Natural killer cell (primary cell): ENCODE measurements at regions of chr11 and their contacts with region 1.

Region 1: DNA sequence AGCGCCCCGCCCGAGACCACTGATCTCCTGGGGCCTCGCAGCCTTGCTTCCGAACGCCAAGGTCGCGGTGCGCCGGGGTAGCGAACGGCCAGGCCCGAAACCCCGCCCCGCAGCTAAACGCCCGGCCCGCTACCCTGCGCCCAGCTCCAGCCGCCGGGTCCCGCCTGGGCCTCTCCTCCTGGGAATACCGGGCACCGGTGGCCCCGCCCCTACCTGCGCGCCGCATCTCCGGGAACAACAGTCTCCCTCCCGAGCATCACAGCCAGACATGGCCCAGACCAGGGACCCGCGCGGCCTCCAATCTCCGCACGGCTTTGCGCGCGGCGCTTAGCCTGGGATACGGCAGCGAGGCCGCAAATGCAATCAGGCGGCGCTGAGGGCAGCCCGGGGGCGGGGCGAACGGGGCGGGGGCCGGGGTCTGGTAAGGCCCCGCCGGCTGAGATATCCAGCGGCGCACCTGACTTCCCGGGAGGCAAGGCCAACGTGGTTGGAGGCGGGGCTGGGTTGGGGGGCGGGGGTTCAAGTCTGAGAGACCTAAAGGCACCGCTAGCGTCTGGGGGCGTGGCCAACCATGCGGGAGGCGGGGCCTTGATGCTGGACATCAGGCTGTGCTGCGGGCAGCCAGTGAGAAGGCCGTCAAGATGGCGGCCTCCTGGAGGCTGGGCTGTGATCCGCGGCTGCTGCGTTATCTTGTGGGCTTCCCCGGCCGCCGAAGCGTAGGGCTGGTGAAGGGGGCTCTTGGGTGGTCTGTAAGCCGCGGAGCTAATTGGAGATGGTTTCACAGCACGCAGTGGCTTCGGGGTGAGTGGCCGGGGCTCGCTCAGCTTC is at the starts of genes APIP and PDHX:
- DNase-seq: peak; percentile 88 to 94
- ATAC-seq: peak; percentile 86 to 94 (median 91)
- H3K4me3 ChIP-seq: peak within 1 kb of the TSS; percentile 96
- H3K4me3 Mint-ChIP-seq: peak within 1 kb of the TSS; percentile 97
- H3K27ac ChIP-seq: peak within 1 kb of the TSS; percentile 90
- H3K27ac Mint-ChIP-seq: peak within 1 kb of the TSS; percentile 95 to 98
- H3K4me1 ChIP-seq: peaks cover 14% of the 10 kb centered on the region
- H3K4me1 Mint-ChIP-seq: peaks cover 41% of the 10 kb centered on the region in 2 donors
- H3K27me3 ChIP-seq: no peaks in the 10 kb centered on the region
- H3K27me3 Mint-ChIP-seq: no peaks in the 10 kb centered on the region
- CTCF ChIP-seq: no peak
- total RNA-seq, gene APIP: 6.6 to 9.4 (median 8.1) TPM
- total RNA-seq, gene PDHX: 18.3 to 27.1 (median 20.9) TPM

Region 2: GRCh38 chr11:34997952-34998528 is 81.8 kb after region 1 on chr11:
- intact Hi-C with region 1: no loop called
- DNase-seq: peak in 1 of 2 donors; percentile 54
- ATAC-seq: peak in 2 of 3 donors; percentile 53 to 63
- H3K4me3 ChIP-seq: no peak overlapping the region
- H3K4me3 Mint-ChIP-seq: no peak overlapping the region
- H3K27ac ChIP-seq: peak overlapping the region; percentile 15
- H3K27ac Mint-ChIP-seq: peak overlapping the region; percentile 8 to 56
- H3K4me1 ChIP-seq: no peaks in the 10 kb centered on the region
- H3K4me1 Mint-ChIP-seq: peaks cover 6 to 7% of the 10 kb centered on the region in 2 donors
- H3K27me3 ChIP-seq: no peaks in the 10 kb centered on the region
- H3K27me3 Mint-ChIP-seq: no peaks in the 10 kb centered on the region
- CTCF ChIP-seq: peak; percentile 91

Region 3: GRCh38 chr11:35165423-35166368 is 249.5 kb after region 1 on chr11:
- intact Hi-C with region 1: loop called (anchors 5 kb)
- DNase-seq: peak; percentile 85 to 98
- ATAC-seq: peak; percentile 69 to 89 (median 88)
- H3K4me3 ChIP-seq: peak overlapping the region; percentile 21
- H3K4me3 Mint-ChIP-seq: peak overlapping the region; percentile 90
- H3K27ac ChIP-seq: peak overlapping the region; percentile 99
- H3K27ac Mint-ChIP-seq: peak overlapping the region; percentile 90 to 99
- H3K4me1 ChIP-seq: peaks cover 68% of the 10 kb centered on the region
- H3K4me1 Mint-ChIP-seq: peaks cover 97% of the 10 kb centered on the region in 2 donors
- H3K27me3 ChIP-seq: no peaks in the 10 kb centered on the region
- H3K27me3 Mint-ChIP-seq: no peaks in the 10 kb centered on the region
- CTCF ChIP-seq: no peak